ENCODE measurements at regions of chr12 and their contacts with region 1.

Region 1: DNA sequence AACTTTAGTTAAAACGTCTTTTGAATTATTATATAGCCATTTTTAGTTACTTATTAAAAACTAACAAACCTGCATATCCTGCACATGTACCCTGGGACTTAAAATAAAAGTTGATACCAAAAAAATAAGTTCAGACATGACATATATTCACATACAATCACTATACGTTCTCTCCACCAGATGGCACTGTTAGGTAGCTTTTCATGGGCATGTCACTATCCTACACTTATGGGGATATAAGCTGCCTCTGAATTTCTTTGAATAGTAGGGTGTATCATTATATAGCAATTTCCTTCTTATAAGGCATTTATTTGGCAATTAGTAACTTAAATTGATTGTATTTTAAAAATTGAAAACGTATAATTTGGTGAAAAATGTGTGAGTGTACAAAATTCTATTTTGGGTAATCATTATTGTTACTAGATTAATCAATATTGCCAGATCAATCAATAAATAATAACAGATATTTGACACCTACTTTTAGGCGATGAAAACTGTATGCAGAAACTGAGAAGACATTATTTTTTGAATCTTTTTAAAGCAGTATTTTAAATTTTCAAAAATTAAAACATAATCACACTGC is 31.8 kb upstream of the OR10A7 start:
- DNase-seq: peak; percentile 74
- H3K4me3 ChIP-seq: no peak overlapping the region
- H3K27ac ChIP-seq: no peak overlapping the region
- H3K27me3 ChIP-seq: no peaks in the 10 kb centered on the region
- CTCF ChIP-seq: peak; percentile 63

Region 2: DNA sequence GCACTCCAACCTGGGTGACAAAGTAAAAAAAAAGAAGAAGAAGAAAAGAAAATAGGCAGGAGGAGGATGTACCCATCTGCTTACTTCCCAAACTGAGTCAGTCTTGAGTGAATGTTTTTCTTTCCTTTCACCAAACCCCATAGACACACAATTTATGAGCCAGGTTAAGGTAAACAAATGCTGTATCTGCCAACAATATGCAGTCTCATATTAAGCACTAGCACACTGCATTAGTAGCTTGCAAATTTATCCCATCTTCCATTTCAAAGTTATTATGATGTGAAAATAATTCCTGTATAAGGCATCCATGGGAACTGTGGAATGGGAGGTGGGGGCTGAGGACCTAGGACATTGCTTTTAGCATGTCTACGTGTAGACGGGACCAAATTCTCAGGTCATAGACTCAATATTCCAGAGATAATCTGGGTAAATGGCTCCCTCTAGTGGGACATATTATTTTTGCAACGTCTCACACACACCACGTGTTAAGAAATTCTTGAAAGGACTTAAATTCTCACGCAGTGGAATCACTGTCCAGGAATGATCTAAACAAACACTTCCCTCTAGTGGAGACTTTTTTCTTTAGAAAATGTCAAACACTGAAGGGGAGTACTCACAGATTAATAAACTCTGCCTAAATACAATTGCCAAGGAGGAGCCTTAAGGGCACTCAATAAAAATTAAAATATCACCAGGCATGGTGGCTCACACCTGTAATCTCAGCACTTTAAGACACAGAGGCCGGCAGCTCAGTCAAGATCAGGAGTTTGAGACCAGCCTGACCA is 430.5 kb after region 1 on chr12:
- in situ Hi-C with region 1: loop called (anchors 25 kb)
- DNase-seq: peak; percentile 94
- H3K4me3 ChIP-seq: no peak overlapping the region
- H3K27ac ChIP-seq: no peak overlapping the region
- H3K27me3 ChIP-seq: no peaks in the 10 kb centered on the region
- CTCF ChIP-seq: peak; percentile 58

Measured in brain microvascular endothelial cell (primary cell).